Colonic mucosa (tissue), 4 donors: ENCODE measurements at regions of chr4 and their contacts with region 1.

Region 1: GRCh38 chr4:1899149-1900086 is 28.2 kb downstream of the NSD2 start:
- DNase-seq: peak; percentile 73
- H3K4me3 ChIP-seq: no peak overlapping the region
- H3K27ac ChIP-seq: no peak overlapping the region
- H3K4me1 ChIP-seq: no peaks in the 10 kb centered on the region
- H3K27me3 ChIP-seq: no peaks in the 10 kb centered on the region
- CTCF ChIP-seq: peak; percentile 83

Region 2: GRCh38 chr4:1417522-1418390 is 481.7 kb before region 1 on chr4:
- intact Hi-C with region 1: no loop called
- DNase-seq: no peak
- H3K4me3 ChIP-seq: no peak overlapping the region
- H3K27ac ChIP-seq: no peak overlapping the region
- H3K4me1 ChIP-seq: no peaks in the 10 kb centered on the region
- H3K27me3 ChIP-seq: peaks cover 12% of the 10 kb centered on the region
- CTCF ChIP-seq: no peak

Region 3: GRCh38 chr4:1746265-1746691 is 153.1 kb before region 1 on chr4:
- intact Hi-C with region 1: loop called (anchors 5 kb)
- DNase-seq: peak; percentile 75
- H3K4me3 ChIP-seq: no peak overlapping the region
- H3K27ac ChIP-seq: no peak overlapping the region
- H3K4me1 ChIP-seq: no peaks in the 10 kb centered on the region
- H3K27me3 ChIP-seq: no peaks in the 10 kb centered on the region
- CTCF ChIP-seq: peak; percentile 74

Region 4: GRCh38 chr4:1809754-1810511 is 89.5 kb before region 1 on chr4:
- intact Hi-C with region 1: loop called (anchors 5 kb)
- DNase-seq: peak; percentile 76
- H3K4me3 ChIP-seq: no peak overlapping the region
- H3K27ac ChIP-seq: no peak overlapping the region
- H3K4me1 ChIP-seq: no peaks in the 10 kb centered on the region
- H3K27me3 ChIP-seq: no peaks in the 10 kb centered on the region
- CTCF ChIP-seq: peak; percentile 89

Region 5: GRCh38 chr4:1856042-1856788 is 43.2 kb before region 1 on chr4 and contains the start of gene LETM1:
- intact Hi-C with region 1: loop called (anchors 10 kb)
- DNase-seq: peak; percentile 96
- H3K4me3 ChIP-seq: peak within 1 kb of the TSS; percentile 72
- H3K27ac ChIP-seq: peak within 1 kb of the TSS; percentile 81
- H3K4me1 ChIP-seq: peaks cover 10% of the 10 kb centered on the region
- H3K27me3 ChIP-seq: no peaks in the 10 kb centered on the region
- CTCF ChIP-seq: no peak
- total RNA-seq, gene LETM1: 76.2 to 139 TPM

Region 6: DNA sequence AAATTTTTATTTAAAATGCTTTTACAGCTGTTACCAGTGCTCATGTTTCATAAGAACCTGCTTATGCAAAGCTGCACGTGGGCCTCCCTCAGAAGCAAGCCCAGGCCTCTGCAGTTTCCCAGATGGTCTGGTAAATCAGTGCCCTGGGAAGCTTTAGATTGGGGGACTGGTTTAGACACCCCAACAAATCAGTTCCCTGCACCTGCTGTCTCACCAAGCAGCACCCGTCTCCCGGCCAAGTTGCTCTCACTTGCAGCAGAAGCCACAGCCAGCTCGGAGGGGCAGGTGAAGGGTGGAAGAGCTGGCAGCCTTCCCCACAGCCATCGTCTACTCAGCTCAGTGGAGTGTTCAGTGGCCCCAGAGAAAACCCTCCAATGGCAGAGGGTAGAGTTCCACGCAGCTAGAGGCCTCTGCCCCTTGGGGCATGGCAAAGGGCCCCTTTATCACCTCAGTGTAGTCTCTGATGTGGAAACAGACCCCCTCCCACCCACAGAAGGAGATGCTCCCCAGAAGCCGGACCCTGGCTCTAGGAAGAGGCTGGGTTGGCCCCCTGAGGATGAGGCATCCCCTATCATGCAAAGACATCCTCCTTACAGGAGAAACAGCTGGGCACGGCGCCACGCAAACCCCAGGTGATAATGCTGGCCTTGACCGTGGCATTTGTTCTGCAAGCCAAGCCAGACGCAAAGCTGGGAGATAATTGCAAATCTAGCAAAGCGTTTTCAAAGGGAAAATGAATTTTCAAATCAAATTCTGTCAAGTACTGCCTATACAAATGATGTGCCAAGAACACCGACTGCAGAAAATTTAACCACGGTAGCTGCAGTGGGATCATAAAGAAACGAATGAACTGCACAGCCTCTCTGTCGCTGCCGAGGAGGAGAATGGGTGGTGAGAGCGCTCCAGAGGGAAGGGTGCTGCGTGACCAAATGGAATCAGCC is 467.1 kb after region 1 on chr4:
- intact Hi-C with region 1: no loop called
- DNase-seq: no peak
- H3K4me3 ChIP-seq: no peak overlapping the region
- H3K27ac ChIP-seq: no peak overlapping the region
- H3K4me1 ChIP-seq: no peaks in the 10 kb centered on the region
- H3K27me3 ChIP-seq: no peaks in the 10 kb centered on the region
- CTCF ChIP-seq: no peak